OCI-LY7 (cell line): ENCODE measurements at regions of chr4 and their contacts with region 1.

Region 1: GRCh38 chr4:163515198-163515597 is 20.7 kb downstream of the TMA16 start:
- DNase-seq: no peak
- H3K4me3 ChIP-seq: no peak overlapping the region
- H3K27ac ChIP-seq: no peak overlapping the region
- H3K4me1 ChIP-seq: no peaks in the 10 kb centered on the region
- CTCF ChIP-seq: no peak

Region 2: GRCh38 chr4:163221467-163221866 is 293.7 kb before region 1 on chr4:
- CTCF ChIA-PET with region 1: no interaction called
- POLR2A ChIA-PET with region 1: no interaction called
- intact Hi-C with region 1: no loop called
- DNase-seq: no peak
- H3K4me3 ChIP-seq: no peak overlapping the region
- H3K27ac ChIP-seq: no peak overlapping the region
- H3K4me1 ChIP-seq: no peaks in the 10 kb centered on the region
- CTCF ChIP-seq: no peak

Region 3: GRCh38 chr4:163233321-163233720 is 281.9 kb before region 1 on chr4:
- CTCF ChIA-PET with region 1: no interaction called
- POLR2A ChIA-PET with region 1: no interaction called
- intact Hi-C with region 1: no loop called
- DNase-seq: no peak
- H3K4me3 ChIP-seq: no peak overlapping the region
- H3K27ac ChIP-seq: no peak overlapping the region
- H3K4me1 ChIP-seq: no peaks in the 10 kb centered on the region
- CTCF ChIP-seq: no peak

Region 4: GRCh38 chr4:163535657-163536056 is 20.5 kb after region 1 on chr4:
- CTCF ChIA-PET with region 1: no interaction called
- POLR2A ChIA-PET with region 1: interaction called, 7 read pairs
- intact Hi-C with region 1: loop called (anchors 2 kb)
- DNase-seq: no peak
- H3K4me3 ChIP-seq: no peak overlapping the region
- H3K27ac ChIP-seq: no peak overlapping the region
- H3K4me1 ChIP-seq: no peaks in the 10 kb centered on the region
- CTCF ChIP-seq: peak; percentile 44